ENCODE measurements at regions of chr15 and their contacts with region 1.

Region 1: GRCh38 chr15:29269485-29270168 is at the start of gene NSMCE3:
- DNase-seq: peak; percentile 90
- H3K4me3 Mint-ChIP-seq: peak within 1 kb of the TSS; percentile 96
- H3K27ac Mint-ChIP-seq: peak within 1 kb of the TSS; percentile 95
- H3K4me1 Mint-ChIP-seq: peaks cover 27% of the 10 kb centered on the region
- H3K27me3 Mint-ChIP-seq: no peaks in the 10 kb centered on the region
- total RNA-seq, gene NSMCE3: 6.1 to 6.6 TPM

Region 2: GRCh38 chr15:28885630-28886430 is 383.8 kb before region 1 on chr15 and contains the start of gene APBA2:
- CTCF ChIA-PET with region 1: no interaction called
- intact Hi-C with region 1: loop called (anchors 5 kb)
- DNase-seq: peak; percentile 52
- H3K4me3 Mint-ChIP-seq: peak within 1 kb of the TSS; percentile 77
- H3K27ac Mint-ChIP-seq: peak within 1 kb of the TSS; percentile 50
- H3K4me1 Mint-ChIP-seq: peaks cover 37% of the 10 kb centered on the region
- H3K27me3 Mint-ChIP-seq: no peaks in the 10 kb centered on the region
- total RNA-seq, gene APBA2: 16.2 to 18.3 TPM

Region 3: GRCh38 chr15:29045717-29046116 is 223.9 kb before region 1 on chr15:
- CTCF ChIA-PET with region 1: no interaction called
- intact Hi-C with region 1: loop called (anchors 10 kb)
- DNase-seq: peak; percentile 45
- H3K4me3 Mint-ChIP-seq: no peak overlapping the region
- H3K27ac Mint-ChIP-seq: no peak overlapping the region
- H3K4me1 Mint-ChIP-seq: peaks cover 48% of the 10 kb centered on the region
- H3K27me3 Mint-ChIP-seq: no peaks in the 10 kb centered on the region

Region 4: DNA sequence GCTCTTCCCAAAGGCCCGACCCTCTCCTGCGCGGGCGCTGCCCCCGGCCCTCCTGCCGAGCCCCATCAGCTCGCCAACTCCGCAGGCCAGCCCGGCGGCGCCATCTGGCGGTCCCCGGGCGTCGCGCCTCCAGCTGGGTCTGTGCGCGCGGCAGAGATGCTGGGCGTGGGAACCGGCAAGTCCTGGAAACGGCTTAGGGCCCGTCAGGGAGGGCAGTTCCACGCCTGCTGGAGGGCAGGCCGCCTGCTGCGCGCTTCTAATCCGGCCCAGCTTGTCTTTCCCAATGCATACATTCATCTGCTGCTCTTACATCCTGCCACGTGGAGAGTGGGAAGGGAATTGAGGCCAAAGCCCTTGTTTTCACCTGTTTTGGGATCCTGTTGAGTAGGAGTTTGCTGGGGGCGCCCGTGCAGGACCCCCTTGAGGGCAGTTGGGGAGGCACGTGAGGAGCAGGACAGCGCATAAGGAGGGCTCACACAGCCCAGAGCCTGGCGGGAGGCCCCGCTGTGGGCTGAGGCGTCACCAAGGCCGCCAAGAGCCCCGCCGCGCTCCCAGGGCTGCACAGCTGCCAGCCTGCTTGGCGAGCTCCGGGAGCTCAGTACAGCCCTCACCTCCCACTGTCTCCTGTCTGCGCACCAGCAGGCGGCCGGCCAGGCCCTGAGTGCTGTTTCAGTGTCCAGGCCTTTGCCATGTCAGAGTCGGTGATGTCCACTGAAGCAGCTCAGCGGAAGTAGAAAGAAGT is 165.6 kb before region 1 on chr15:
- CTCF ChIA-PET with region 1: no interaction called
- intact Hi-C with region 1: loop called (anchors 10 kb)
- DNase-seq: peak; percentile 59
- H3K4me3 Mint-ChIP-seq: no peak overlapping the region
- H3K27ac Mint-ChIP-seq: no peak overlapping the region
- H3K4me1 Mint-ChIP-seq: no peaks in the 10 kb centered on the region
- H3K27me3 Mint-ChIP-seq: no peaks in the 10 kb centered on the region

Region 5: DNA sequence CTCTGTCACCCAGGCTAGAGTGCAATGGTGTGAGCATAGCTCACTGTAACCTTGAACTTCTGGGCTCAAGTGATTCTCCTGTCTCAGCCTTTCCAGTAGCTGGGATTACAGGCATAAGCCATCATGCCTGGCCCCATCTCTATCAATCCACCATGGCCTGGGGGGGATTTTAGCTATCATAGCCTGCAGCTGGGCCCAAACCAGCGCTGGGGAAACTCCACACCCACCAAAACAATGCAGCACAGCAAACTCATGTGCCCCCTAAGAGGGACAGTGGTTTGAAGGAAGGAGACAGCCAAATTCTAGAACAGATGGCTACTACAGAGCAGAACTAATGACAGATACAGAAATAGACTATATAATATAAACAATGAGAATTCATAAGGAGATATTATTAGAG is 13.8 kb after region 1 on chr15:
- CTCF ChIA-PET with region 1: no interaction called
- intact Hi-C with region 1: no loop called
- DNase-seq: no peak
- H3K4me3 Mint-ChIP-seq: no peak overlapping the region
- H3K27ac Mint-ChIP-seq: no peak overlapping the region
- H3K4me1 Mint-ChIP-seq: no peaks in the 10 kb centered on the region
- H3K27me3 Mint-ChIP-seq: peaks cover 27% of the 10 kb centered on the region

Measured in activated naive CD4-positive, alpha-beta T cell treated with anti-CD3 and anti-CD28 coated beads for 36 hours (primary cell).